Activated T-helper 1 cell treated with anti-CD3 and anti-CD28 coated beads, Interleukin-12 subunit alpha, Interleukin-12 subunit beta, Interleukin-2, Interleukin-4 antibody, amounts not matched to agents 30 ng/mL and 10 ng/mL and 1 ng/mL, durations not matched to agents 14 hours and 24 hours and 36 hours (primary cell): ENCODE measurements at regions of chr3 and their contacts with region 1.

Region 1: DNA sequence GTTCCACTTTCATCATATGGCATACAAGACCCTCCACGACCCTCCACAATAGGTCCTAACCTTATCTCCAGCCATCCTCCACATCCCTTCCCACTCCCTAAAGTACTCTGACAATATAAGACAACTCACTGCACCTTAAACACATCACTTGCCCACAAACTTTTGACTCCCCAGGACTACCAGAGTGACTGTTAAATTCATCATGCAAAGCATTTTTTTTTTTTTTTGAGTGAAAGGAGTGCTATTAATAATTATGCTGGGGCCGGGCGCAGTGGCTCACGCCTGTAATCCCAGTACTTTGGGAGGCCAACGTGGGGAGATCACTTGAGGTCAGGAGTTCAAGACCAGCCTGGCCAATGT is 55.8 kb downstream of the OSBPL10 start:
- DNase-seq: no peak
- H3K4me3 Mint-ChIP-seq: peak overlapping the region; percentile 7
- H3K27ac Mint-ChIP-seq: peak overlapping the region; percentile 21
- H3K4me1 Mint-ChIP-seq: peaks cover 37% of the 10 kb centered on the region
- H3K27me3 Mint-ChIP-seq: no peaks in the 10 kb centered on the region

Region 2: DNA sequence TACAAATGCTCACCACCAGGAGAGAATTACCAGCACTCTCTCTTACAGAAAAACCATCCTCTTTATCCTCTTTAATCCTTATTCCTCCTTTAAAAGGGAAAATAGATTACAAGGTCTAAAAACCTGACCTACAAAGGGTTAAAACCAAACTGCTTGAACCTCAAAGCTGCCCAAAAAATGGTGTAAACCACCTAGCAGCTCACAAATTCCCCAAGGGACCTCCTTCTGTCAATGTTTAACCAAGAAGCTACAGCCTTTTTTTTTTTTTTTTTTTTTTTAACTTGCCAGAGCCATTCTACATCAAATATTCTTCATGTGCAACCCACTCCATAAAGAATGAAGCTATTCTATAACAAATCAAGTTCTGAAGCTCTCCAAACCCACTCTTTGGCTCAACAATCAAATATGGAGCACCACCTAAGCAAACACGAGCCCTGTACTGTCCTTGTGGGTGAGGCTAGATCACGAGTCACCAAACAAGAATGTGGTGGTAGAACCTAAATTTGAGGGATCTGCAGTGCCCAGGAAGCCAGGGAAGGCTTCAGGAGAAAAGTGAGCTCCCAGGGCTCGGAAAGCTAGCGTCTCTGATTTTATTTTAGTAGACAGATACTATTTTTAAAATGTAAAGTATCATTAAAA is 35.7 kb after region 1 on chr3:
- intact Hi-C with region 1: loop called (anchors 5 kb)
- DNase-seq: no peak
- H3K4me3 Mint-ChIP-seq: no peak overlapping the region
- H3K27ac Mint-ChIP-seq: no peak overlapping the region
- H3K4me1 Mint-ChIP-seq: peaks cover 25% of the 10 kb centered on the region
- H3K27me3 Mint-ChIP-seq: no peaks in the 10 kb centered on the region

Region 3: GRCh38 chr3:32037929-32038267 is 112.6 kb after region 1 on chr3:
- intact Hi-C with region 1: no loop called
- DNase-seq: no peak
- H3K4me3 Mint-ChIP-seq: no peak overlapping the region
- H3K27ac Mint-ChIP-seq: no peak overlapping the region
- H3K4me1 Mint-ChIP-seq: no peaks in the 10 kb centered on the region
- H3K27me3 Mint-ChIP-seq: peaks cover 14% of the 10 kb centered on the region